ENCODE measurements at regions of chr4 and their contacts with region 1.

Region 1: GRCh38 chr4:26034849-26035248 is 120.8 kb downstream of the SMIM20 start:
- DNase-seq: peak; percentile 67
- H3K4me3 Mint-ChIP-seq: no peak overlapping the region
- H3K27ac Mint-ChIP-seq: no peak overlapping the region
- H3K4me1 Mint-ChIP-seq: peaks cover 30% of the 10 kb centered on the region
- H3K27me3 Mint-ChIP-seq: peaks cover 2% of the 10 kb centered on the region

Region 2: GRCh38 chr4:26061248-26061986 is 26.6 kb after region 1 on chr4:
- CTCF ChIA-PET with region 1: interaction called, 7 read pairs
- POLR2A ChIA-PET with region 1: interaction called, 3 read pairs
- intact Hi-C with region 1: loop called (anchors 2 kb)
- DNase-seq: peak; percentile 43
- H3K4me3 Mint-ChIP-seq: no peak overlapping the region
- H3K27ac Mint-ChIP-seq: no peak overlapping the region
- H3K4me1 Mint-ChIP-seq: peaks cover 26% of the 10 kb centered on the region
- H3K27me3 Mint-ChIP-seq: no peaks in the 10 kb centered on the region